ENCODE measurements at regions of chr17 and their contacts with region 1.

Region 1: DNA sequence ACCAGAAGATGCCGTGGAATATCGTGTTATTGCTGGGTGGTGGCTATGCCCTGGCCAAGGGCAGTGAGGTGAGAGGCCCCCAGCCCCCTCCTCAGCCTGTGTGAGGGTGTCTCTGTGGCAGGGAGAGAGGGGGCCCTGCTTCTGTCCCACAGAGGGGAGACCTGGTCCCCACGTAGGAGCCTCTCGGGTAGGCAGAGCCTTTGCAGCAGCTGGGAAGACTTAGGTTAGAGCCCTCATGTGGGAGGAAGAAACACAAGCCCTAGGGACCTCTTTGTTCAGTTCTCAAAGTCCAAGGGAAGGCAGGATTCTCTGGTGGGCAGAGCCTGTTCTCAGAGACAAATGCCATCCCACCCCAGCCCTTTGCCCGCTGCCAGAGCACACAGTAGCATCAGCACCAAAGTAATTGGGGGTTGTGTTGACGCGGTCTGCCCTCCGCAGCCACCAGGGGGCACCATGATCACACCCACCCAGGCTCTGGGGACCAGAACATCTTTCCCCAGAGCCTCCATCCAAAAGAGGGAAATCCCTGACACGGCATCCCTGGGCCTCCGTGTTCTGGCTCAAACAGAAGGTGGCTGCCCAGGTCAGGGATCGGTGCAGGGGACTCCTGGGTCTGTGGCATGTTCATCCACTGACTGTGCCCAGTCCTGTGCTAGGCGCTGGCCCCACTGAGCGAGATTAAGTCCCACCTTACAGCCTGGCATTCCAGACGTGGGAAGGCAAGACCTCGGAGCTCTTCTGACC is 11.5 kb upstream of the FOXN1 start:
- DNase-seq: peak; percentile 55 to 83 (median 65)
- H3K4me3 ChIP-seq: no peak overlapping the region
- H3K4me3 Mint-ChIP-seq: no peak overlapping the region
- H3K27ac ChIP-seq: no peak overlapping the region
- H3K27ac Mint-ChIP-seq: peak overlapping the region in 1 of 8 donors; percentile 14
- H3K4me1 ChIP-seq: no peaks in the 10 kb centered on the region
- H3K4me1 Mint-ChIP-seq: no peaks in the 10 kb centered on the region
- H3K27me3 ChIP-seq: no peaks in the 10 kb centered on the region
- H3K27me3 Mint-ChIP-seq: peaks cover 3 to 14% of the 10 kb centered on the region in 2 donors

Region 2: DNA sequence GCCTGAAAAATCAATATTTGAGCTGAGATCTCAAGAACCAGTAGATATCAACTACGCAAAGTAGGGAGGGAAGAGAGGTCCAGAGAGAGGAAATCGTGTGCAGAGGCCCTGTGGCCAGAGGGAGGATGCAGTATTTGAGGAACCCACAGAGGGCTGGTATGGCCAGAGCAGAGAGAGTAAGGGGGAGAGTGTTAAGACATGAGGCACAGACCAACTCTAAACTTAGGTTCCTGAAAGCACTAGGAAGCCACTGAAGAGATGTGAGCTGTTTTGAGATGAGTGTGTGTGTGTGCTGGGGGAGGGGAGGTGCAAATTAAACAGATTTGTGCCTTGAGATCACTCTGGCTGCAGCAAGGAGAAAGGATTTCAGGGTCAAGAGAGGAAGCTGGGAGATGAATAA is 10.3 kb before region 1 on chr17:
- CTCF ChIA-PET with region 1: interaction called, 12 read pairs
- POLR2A ChIA-PET with region 1: no interaction called
- DNase-seq: no peak
- H3K4me3 ChIP-seq: no peak overlapping the region
- H3K4me3 Mint-ChIP-seq: no peak overlapping the region
- H3K27ac ChIP-seq: no peak overlapping the region
- H3K27ac Mint-ChIP-seq: peak overlapping the region in 1 of 8 donors; percentile 51
- H3K4me1 ChIP-seq: no peaks in the 10 kb centered on the region
- H3K4me1 Mint-ChIP-seq: no peaks in the 10 kb centered on the region
- H3K27me3 ChIP-seq: no peaks in the 10 kb centered on the region
- H3K27me3 Mint-ChIP-seq: peaks cover 0 to 2% of the 10 kb centered on the region in 2 donors

Region 3: DNA sequence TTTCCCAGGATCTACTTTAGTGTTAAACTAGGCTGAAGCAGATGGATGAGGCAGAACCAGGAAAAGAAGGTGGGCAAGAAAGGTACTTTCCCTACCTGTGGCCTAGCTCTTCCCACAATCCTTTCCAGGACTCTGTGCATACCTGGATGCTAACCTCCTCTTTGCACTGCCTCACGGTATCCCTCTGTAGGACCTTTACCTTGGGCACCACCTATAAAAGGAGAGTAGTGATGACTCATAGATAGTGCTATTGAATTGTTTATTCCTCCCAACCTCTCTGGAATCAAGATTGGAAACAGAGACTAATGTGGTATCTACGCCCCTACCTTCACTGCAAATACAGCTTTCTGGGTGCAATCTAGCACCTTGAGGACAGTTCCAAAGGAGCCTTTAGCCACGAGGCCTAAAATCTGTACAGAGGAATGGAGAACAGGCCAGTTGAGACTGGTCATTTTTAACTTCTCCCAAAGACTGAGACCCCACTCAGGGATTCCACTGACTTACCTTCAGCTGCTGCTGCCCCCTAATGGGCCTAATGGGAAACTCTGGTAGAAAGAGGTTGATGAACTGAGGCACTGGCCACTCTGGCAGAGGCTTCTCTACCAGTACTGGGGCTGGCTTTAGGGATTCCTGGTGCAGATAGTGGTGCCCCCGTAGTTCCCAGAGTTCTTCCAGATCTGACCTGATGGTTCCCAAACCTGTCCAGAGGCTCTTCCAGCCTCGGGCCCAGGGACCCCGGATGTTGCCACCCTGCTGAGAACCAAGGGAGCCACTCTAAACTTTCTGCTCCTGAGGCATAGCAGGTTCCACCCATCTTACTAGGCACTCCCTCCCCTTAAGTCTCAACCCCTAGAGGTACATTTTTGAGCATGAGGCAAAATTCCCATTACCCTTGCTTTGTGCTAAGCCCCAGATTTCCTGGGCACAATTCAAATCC is 118.6 kb after region 1 on chr17:
- CTCF ChIA-PET with region 1: interaction called, 37 read pairs
- POLR2A ChIA-PET with region 1: interaction called, 3 read pairs
- DNase-seq: peak; percentile 6 to 59 (median 18)
- H3K4me3 ChIP-seq: no peak overlapping the region
- H3K4me3 Mint-ChIP-seq: no peak overlapping the region
- H3K27ac ChIP-seq: no peak overlapping the region
- H3K27ac Mint-ChIP-seq: peak overlapping the region in 4 of 8 donors; percentile 58 to 80 (median 70)
- H3K4me1 ChIP-seq: no peaks in the 10 kb centered on the region
- H3K4me1 Mint-ChIP-seq: peaks cover 0 to 6% (median 0%) of the 10 kb centered on the region in 3 donors
- H3K27me3 ChIP-seq: no peaks in the 10 kb centered on the region
- H3K27me3 Mint-ChIP-seq: no peaks in the 10 kb centered on the region